ENCODE measurements at regions of chr17 and their contacts with region 1.

Region 1: DNA sequence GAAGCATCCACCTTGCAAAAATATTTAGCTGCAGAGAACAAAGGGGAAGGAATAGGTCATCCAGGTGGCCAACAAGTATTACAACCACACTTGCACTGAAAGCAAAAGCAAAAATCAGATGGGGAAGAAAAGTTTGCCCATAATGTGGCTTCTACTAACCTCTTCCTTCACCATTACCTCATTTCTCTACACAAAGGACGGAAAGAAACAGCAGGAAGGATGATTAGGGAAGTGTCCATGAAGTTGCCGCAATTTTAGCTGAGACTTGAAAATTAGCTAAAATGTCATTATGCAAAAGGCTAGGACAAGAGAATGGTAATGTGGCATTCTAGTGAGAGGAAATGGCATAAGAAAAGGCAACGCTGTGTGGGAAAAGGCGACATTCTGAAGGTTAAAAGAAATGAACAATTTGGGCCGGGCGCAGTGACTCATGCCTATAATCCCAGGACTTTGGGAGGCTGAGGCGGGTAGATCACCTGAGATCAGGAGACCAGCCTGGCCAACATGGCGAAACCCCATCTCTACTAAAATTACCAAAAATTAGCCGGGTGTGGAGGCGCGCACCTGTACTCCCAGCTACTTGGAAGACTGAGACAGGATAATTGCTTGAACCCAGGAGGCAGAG is 13.7 kb downstream of the KANSL1 start:
- DNase-seq: no peak
- ATAC-seq: no peak
- H3K4me3 ChIP-seq: no peak overlapping the region
- H3K27ac ChIP-seq: no peak overlapping the region
- H3K4me1 ChIP-seq: peaks cover 71% of the 10 kb centered on the region
- H3K27me3 ChIP-seq: no peaks in the 10 kb centered on the region
- CTCF ChIP-seq: no peak
- EP300 ChIP-seq: no peak
- POLR2A ChIP-seq: no peak
- RAD21 ChIP-seq: no peak

Region 2: GRCh38 chr17:46139432-46140210 is 39.9 kb before region 1 on chr17:
- CTCF ChIA-PET with region 1: no interaction called
- POLR2A ChIA-PET with region 1: no interaction called
- in situ Hi-C with region 1: no loop called
- intact Hi-C with region 1: loop called (anchors 5 kb)
- DNase-seq: no peak
- ATAC-seq: no peak
- H3K4me3 ChIP-seq: no peak overlapping the region
- H3K27ac ChIP-seq: no peak overlapping the region
- H3K4me1 ChIP-seq: peaks cover 54% of the 10 kb centered on the region
- H3K27me3 ChIP-seq: no peaks in the 10 kb centered on the region
- CTCF ChIP-seq: no peak
- EP300 ChIP-seq: no peak
- POLR2A ChIP-seq: no peak
- RAD21 ChIP-seq: no peak

Region 3: GRCh38 chr17:46150216-46150963 is 29.1 kb before region 1 on chr17:
- CTCF ChIA-PET with region 1: no interaction called
- POLR2A ChIA-PET with region 1: no interaction called
- in situ Hi-C with region 1: no loop called
- intact Hi-C with region 1: no loop called
- DNase-seq: no peak
- ATAC-seq: no peak
- H3K4me3 ChIP-seq: no peak overlapping the region
- H3K27ac ChIP-seq: no peak overlapping the region
- H3K4me1 ChIP-seq: peaks cover 53% of the 10 kb centered on the region
- H3K27me3 ChIP-seq: no peaks in the 10 kb centered on the region
- CTCF ChIP-seq: no peak
- EP300 ChIP-seq: no peak
- POLR2A ChIP-seq: no peak
- RAD21 ChIP-seq: no peak

Region 4: DNA sequence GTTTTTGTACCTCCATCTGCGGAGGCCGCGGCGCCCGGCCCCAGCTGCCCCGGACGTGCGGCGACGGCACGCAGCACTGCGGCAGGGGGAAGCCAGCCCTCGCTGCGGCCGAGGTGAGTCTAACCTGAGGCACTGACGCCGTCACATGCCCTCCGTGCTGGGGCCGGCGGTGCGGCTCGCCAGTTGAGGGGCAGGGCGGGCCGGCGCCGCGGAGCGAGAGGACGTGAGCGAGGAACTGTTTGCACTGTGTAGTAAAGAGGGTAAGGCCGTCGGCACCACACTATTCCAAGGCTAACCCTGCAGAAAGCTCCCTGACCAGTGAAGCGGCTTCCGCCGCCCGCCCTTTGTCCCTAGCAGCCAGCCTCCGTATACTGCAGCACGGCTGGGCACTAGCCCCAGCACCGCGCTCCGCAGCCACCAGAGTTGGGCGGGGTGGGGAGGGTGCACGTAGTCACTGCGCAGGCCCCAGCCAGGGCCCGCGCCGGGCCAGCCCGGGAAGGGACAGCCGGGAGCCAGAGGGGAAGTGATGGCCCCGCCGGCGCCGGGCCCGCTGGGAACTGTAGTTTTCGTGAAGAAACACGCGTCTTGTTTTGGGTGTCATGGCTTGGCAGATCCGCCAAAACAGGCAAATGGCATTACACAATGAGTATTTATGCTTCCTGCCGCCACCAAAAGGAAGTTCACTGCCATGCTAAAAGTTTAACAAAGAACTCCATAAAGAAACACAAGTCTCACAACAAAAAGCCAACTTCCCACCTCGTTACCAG is 14.3 kb after region 1 on chr17:
- CTCF ChIA-PET with region 1: no interaction called
- POLR2A ChIA-PET with region 1: no interaction called
- in situ Hi-C with region 1: no loop called
- intact Hi-C with region 1: no loop called
- DNase-seq: peak; percentile 94
- ATAC-seq: peak; percentile 98
- H3K4me3 ChIP-seq: peak overlapping the region; percentile 84 to 98 (median 94)
- H3K27ac ChIP-seq: peak overlapping the region; percentile 96
- H3K4me1 ChIP-seq: peaks cover 46% of the 10 kb centered on the region
- H3K27me3 ChIP-seq: no peaks in the 10 kb centered on the region; a peak in 1 of 5 replicates
- CTCF ChIP-seq: peak; percentile 27
- EP300 ChIP-seq: peak in 1 of 2 experiments; percentile 25; a peak in 1 of 4 replicates
- POLR2A ChIP-seq: peak; percentile 93 to 95
- RAD21 ChIP-seq: no peak; the same call in none of the 2 replicates

Region 5: DNA sequence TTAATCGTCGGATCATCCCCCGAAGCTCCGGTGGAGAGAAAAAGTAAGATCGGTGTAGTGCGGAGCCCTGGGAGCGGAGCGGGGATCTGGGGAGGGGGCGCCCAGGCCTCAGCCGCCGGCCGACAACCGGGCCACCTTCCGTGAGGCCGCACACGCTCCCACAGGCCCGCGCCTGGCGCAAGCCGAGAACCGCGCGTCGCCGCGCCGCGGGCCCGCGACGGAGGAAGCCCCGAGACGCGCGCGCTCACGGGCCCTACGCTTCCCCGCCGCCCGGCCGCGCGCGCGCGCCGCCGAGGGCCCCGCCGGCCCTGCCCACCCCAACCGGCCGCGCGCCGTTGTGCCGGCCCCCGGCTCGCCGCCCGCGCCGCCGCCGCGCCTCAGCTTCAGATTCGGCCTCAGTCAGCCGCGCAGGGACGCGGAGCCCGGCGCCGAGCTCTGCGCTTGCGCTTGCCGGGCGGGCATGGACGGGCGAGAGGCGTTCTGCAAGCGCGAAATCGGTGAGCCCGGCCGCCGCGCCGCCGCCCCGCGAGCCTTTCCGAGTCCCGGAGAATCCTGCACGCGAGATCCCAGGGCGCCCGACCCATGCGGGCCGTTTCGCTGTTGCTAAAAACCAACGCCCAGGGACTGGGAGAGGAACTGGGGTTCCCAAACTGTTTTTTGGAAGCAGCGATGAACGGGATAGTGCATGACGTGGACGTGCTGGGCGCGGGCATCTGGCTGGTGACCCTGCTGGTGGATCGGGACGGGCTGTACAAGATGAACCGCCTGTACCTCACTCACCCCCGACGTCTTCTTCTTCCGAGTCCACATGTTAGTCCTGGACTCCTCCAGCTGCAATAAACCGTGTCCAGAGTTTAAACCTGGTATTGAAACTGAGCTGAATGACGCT is 87.4 kb after region 1 on chr17:
- CTCF ChIA-PET with region 1: no interaction called
- POLR2A ChIA-PET with region 1: no interaction called
- in situ Hi-C with region 1: no loop called
- intact Hi-C with region 1: no loop called
- DNase-seq: peak; percentile 74
- ATAC-seq: peak; percentile 87
- H3K4me3 ChIP-seq: peak overlapping the region; percentile 77 to 96 (median 84)
- H3K27ac ChIP-seq: peak overlapping the region; percentile 81
- H3K4me1 ChIP-seq: peaks cover 65% of the 10 kb centered on the region
- H3K27me3 ChIP-seq: peaks cover 0 to 9% of the 10 kb centered on the region in 2 experiments; a peak in 1 of 5 replicates
- CTCF ChIP-seq: no peak; the same call in 1 of the 2 replicates
- EP300 ChIP-seq: no peak
- POLR2A ChIP-seq: peak; percentile 74 to 81
- RAD21 ChIP-seq: peak; percentile 27; the same call in 1 of the 2 replicates

Measured in HepG2 (cell line).